Psoas muscle (tissue), 8 donors: ENCODE measurements at regions of chr12 and their contacts with region 1.

Region 1: DNA sequence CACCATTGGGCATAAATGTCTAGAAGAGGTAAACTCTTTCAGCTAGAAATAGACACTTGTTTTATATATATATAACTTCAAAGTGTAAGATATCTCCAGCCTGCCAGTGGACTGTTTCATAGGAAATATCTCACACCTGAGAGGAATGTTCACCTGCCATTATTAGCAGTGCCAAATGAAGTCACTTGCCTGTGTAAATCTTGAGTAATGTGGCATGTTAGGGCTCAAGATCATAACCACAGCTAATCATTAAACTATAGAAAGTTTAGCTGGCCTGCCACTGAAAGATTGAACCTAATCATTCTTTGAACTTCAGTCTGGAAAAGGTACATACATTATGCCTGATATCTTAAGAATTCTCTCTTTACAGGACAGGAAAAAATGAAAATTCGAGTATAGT is 25.5 kb upstream of the KCNJ8 start:
- DNase-seq: no peak
- ATAC-seq: no peak
- H3K4me3 ChIP-seq: no peak overlapping the region
- H3K27ac ChIP-seq: no peak overlapping the region
- H3K4me1 ChIP-seq: no peaks in the 10 kb centered on the region
- H3K27me3 ChIP-seq: no peaks in the 10 kb centered on the region
- CTCF ChIP-seq: no peak

Region 2: DNA sequence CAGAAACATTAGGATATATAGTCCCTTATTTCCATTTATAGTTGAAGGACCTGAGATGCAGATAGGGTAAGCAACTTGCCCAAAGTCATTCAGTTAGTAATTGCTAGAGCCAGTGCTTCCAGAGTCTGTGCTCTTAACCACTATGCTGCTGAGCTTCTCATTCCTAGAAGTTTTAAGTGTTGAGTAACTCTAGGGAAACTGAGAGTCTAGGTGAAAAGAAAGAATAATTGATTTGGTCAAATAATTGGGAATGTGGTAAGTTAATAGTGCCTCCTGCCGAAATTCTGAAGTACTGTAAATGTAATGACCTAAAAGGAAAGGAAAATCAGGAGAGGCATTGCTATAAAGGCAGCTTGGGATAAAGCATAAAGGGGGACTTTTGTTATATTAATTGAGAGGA is 348.5 kb before region 1 on chr12:
- intact Hi-C with region 1: loop called in 1 of 2 experiments (anchors 5 kb)
- DNase-seq: no peak
- ATAC-seq: no peak
- H3K4me3 ChIP-seq: no peak overlapping the region
- H3K27ac ChIP-seq: no peak overlapping the region
- H3K4me1 ChIP-seq: no peaks in the 10 kb centered on the region
- H3K27me3 ChIP-seq: no peaks in the 10 kb centered on the region
- CTCF ChIP-seq: no peak

Region 3: DNA sequence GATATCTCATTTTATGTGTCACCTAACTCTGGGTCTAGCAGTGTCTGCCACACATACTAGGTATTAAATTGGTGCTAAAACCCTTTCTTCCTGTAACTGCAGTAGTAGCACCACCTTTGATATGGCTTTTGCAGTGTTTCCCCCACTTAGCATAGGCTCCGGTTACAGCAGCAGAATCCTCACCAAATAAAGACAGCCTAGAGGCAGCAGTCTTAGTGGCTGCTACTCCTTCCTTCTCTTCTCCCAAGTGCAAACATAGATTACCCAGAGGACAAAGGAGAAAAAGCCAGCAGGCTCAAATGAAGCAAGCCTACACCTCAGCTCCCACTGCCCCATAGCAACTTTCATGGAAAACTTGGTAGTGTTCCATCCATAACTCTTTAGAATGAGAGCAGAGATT is 171.3 kb after region 1 on chr12:
- intact Hi-C with region 1: no loop called
- DNase-seq: no peak
- ATAC-seq: no peak
- H3K4me3 ChIP-seq: no peak overlapping the region
- H3K27ac ChIP-seq: no peak overlapping the region
- H3K4me1 ChIP-seq: no peaks in the 10 kb centered on the region
- H3K27me3 ChIP-seq: no peaks in the 10 kb centered on the region
- CTCF ChIP-seq: no peak